ENCODE measurements at regions of chr7 and their contacts with region 1.

Region 1: DNA sequence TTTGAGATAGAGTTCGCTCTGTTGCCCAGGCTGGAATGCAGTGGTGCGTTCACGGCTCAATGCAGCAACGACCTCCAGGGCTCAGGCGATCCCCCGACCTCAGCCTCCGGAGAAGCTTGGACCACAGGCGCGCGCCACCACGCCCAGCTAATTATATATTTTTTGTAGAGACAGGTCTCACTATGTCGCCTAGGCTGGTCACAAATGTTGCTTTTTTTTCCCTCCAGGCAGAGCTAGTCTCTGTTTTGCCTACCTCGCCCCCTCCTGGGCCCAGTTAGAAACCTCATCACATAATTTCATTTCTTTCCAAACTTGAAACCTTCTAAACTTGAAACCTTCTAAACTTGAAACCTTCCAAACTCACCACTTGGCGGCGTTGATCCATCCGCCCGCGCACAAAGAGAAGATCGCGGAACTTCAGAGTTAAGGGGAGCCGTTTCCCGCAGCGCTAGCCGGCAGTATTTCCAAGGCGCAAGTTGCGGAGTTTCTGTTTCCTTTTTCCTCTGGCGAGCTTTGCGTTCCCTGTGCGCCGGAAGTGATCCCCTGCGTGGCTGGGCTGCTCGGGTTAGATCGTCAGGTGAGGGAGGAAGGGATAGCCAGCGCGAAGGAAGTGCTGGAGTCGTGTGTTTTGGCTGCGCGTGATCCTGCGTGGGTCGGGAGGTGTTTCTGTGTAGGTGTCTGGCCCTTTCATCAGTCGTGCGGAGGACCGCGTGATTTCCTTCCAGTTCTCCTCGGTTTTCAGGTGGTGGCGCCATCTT is at the start of gene SSBP1:
- DNase-seq: peak; percentile 87
- H3K4me3 ChIP-seq: peak within 1 kb of the TSS; percentile 84
- H3K27ac ChIP-seq: peak within 1 kb of the TSS; percentile 89
- H3K4me1 ChIP-seq: peaks cover 37% of the 10 kb centered on the region
- H3K27me3 ChIP-seq: no peaks in the 10 kb centered on the region
- CTCF ChIP-seq: peak; percentile 80
- total RNA-seq, gene SSBP1: 83.8 TPM

Region 2: GRCh38 chr7:141654551-141654950 is 83.5 kb before region 1 on chr7:
- intact Hi-C with region 1: loop called (anchors 10 kb)
- DNase-seq: no peak
- H3K4me3 ChIP-seq: no peak overlapping the region
- H3K27ac ChIP-seq: peak overlapping the region; percentile 20
- H3K4me1 ChIP-seq: peaks cover 19% of the 10 kb centered on the region
- H3K27me3 ChIP-seq: no peaks in the 10 kb centered on the region
- CTCF ChIP-seq: peak; percentile 75